Activated CD8-positive, alpha-beta memory T cell treated with anti-CD3 and anti-CD28 coated beads, Interleukin-2, amount 10 ng/mL, durations not matched to agents 7 days and 5 days (primary cell): ENCODE measurements at regions of chr12 and their contacts with region 1.

Region 1: DNA sequence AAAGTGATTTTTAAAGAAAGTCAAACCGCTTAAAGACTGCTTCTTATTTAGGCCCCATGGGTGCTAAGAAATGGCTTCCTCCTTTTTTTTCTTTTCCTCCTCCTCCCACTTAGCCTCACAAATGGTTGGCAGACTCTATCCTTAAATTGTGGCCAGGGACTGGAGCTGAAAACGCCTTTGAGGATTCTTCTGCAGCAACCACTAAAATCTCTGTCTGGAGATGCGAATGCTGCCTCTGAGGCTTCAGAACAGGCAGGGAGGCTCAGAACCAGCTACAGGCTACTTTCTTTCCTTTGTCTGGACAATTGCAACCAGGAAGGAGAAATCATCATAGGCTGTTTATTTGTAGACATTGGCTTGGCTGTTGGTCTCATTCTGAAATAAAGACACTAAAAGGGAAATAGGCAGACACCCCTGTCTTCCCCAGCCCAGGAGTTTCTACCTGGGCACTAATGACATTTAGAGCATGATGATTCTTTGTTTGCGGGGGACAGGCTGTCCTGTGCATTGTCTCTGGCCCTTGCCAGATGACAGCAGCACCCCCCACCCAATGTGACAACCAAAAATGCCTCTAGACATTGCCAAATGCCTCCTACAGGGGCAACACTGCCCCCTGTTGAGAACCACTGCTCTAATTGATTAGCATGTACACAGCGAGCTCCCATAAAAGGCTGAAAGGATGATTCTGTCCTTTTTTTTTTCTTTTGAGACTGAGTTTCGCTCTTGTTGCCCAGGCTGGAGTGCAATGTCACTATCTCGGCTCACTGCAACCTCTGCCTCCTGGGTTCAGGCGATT is 50.3 kb downstream of the MAP1LC3B2 start:
- DNase-seq: peak; percentile 48
- ATAC-seq: no peak
- H3K4me3 Mint-ChIP-seq: no peak overlapping the region
- H3K27ac Mint-ChIP-seq: no peak overlapping the region
- H3K4me1 Mint-ChIP-seq: peaks cover 11% of the 10 kb centered on the region
- H3K27me3 Mint-ChIP-seq: peaks cover 15% of the 10 kb centered on the region

Region 2: GRCh38 chr12:116599285-116600136 is 10.0 kb before region 1 on chr12:
- CTCF ChIA-PET with region 1: interaction called, 10 read pairs
- DNase-seq: peak; percentile 69
- ATAC-seq: peak; percentile 74
- H3K4me3 Mint-ChIP-seq: no peak overlapping the region
- H3K27ac Mint-ChIP-seq: no peak overlapping the region
- H3K4me1 Mint-ChIP-seq: peaks cover 21% of the 10 kb centered on the region
- H3K27me3 Mint-ChIP-seq: peaks cover 5% of the 10 kb centered on the region